Esophagus muscularis mucosa (tissue), 4 donors: ENCODE measurements at regions of chr13 and their contacts with region 1.

Region 1: GRCh38 chr13:40069173-40070044 is 413.9 kb downstream of the COG6 start:
- DNase-seq: peak; percentile 91
- H3K4me3 ChIP-seq: no peak overlapping the region
- H3K27ac ChIP-seq: peak overlapping the region in 1 of 4 donors; percentile 23
- H3K4me1 ChIP-seq: peaks cover 0 to 19% (median 16%) of the 10 kb centered on the region in 4 donors
- H3K27me3 ChIP-seq: no peaks in the 10 kb centered on the region
- CTCF ChIP-seq: peak; percentile 87 to 90 (median 89)
- EP300 ChIP-seq: no peak
- POLR2A ChIP-seq: no peak

Region 2: GRCh38 chr13:39684531-39685137 is 384.8 kb before region 1 on chr13:
- intact Hi-C with region 1: loop called (anchors 10 kb)
- DNase-seq: no peak
- H3K4me3 ChIP-seq: no peak overlapping the region
- H3K27ac ChIP-seq: no peak overlapping the region
- H3K4me1 ChIP-seq: no peaks in the 10 kb centered on the region
- H3K27me3 ChIP-seq: no peaks in the 10 kb centered on the region
- CTCF ChIP-seq: peak; percentile 37 to 50 (median 50)
- EP300 ChIP-seq: no peak
- POLR2A ChIP-seq: no peak

Region 3: GRCh38 chr13:40344270-40345148 is 275.1 kb after region 1 on chr13:
- intact Hi-C with region 1: loop called (anchors 10 kb)
- DNase-seq: no peak
- H3K4me3 ChIP-seq: no peak overlapping the region
- H3K27ac ChIP-seq: peak overlapping the region in 2 of 4 donors; percentile 21 to 37
- H3K4me1 ChIP-seq: peaks cover 18 to 87% (median 74%) of the 10 kb centered on the region in 4 donors
- H3K27me3 ChIP-seq: no peaks in the 10 kb centered on the region
- CTCF ChIP-seq: no peak
- EP300 ChIP-seq: peak; percentile 56
- POLR2A ChIP-seq: no peak